ENCODE measurements at regions of chr20 and their contacts with region 1.

Region 1: GRCh38 chr20:37095599-37096414 is at the start of gene RBL1:
- DNase-seq: peak; percentile 89
- total RNA-seq, gene RBL1: 2.6 TPM

Region 2: DNA sequence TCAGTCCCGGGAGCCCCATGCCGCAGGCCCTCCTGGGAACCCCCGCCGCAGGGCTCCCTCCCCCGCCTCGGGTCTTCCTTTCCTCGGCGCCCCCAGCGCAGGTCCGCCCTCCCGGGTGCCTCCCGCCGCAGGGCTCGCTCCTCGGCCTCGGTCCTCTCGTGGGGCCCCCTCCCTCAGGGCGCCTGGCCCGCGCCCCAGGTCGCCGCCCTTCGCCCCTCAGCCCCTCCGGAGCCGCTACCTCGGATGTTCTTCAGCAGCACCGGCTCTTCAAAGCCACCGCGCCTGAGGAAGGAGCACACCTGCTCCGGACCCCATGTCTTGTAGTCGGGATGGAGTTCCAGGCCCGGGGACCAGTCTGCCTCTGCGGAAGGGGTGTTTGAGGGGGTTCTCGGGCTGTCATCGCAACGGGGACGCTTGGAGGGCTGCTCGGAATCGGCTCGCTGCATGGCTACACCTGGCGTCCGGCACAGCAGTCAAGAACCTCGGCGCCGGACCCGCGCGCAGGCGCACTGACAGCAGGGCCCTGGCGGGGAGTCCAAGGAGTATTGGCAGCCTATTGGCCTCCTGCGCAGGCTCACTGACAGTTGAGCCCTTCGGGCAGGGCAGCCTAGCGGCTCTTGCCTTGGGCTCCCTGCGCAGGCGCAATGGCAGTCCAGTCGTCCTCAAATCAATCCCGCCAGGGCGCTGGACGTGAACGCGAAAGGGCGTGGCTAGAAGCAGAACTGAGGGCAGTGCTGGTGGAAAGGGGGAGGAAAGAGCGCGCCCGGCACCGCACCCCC is 144.4 kb before region 1 on chr20 and contains the start of gene SAMHD1:
- intact Hi-C with region 1: loop called (anchors 10 kb)
- DNase-seq: peak; percentile 99
- total RNA-seq, gene SAMHD1: 20.7 TPM

Measured in cardiac septum (tissue), 1 donor.